ENCODE measurements at regions of chr21 and their contacts with region 1.

Region 1: DNA sequence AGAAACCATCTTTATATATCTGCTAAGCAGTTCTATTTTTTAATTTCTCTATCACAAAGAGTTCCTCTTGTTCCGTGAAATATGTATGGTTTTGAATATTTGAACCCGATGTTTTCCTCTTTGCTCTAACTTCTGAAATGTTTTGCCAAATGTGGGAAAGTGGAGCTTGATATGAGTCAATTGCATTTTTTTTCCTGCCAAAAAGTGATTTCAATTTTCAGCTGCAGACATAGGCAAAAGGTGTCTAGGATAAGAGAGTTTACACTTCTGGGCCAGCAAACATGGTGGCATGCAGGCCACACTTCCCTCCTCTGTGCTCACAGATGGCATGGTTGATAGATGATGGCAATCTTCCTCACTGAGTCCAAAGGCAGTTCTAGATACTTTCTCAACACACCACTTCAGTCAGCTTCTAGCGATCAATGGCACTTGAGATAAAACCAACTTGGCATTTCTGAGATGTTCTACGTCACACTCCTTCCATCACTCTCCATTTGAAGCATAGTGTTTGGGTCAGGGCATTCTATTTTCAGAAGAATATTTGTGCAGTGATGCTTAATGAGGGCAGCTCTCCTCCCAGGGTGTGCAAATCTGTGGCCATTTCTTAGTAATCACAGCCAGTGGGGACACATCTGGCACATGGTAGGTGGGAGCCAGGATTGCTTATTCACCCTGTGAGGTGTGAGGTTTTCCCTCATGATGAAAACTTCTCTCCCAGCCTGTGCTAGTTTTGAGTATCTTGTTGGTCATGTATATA is 54.4 kb upstream of the SCAF4 start:
- DNase-seq: no peak

Region 2: GRCh38 chr21:32257962-32258785 is 471.8 kb after region 1 on chr21:
- intact Hi-C with region 1: loop called (anchors 1 kb)
- DNase-seq: peak; percentile 53 to 96 (median 76)

Measured in posterior cingulate gyrus (tissue), 11 donors.